Activated naive CD8-positive, alpha-beta T cell treated with anti-CD3 and anti-CD28 coated beads, Interleukin-2, amount 10 ng/mL, durations not matched to agents 7 days and 5 days (primary cell): ENCODE measurements at regions of chr9 and their contacts with region 1.

Region 1: DNA sequence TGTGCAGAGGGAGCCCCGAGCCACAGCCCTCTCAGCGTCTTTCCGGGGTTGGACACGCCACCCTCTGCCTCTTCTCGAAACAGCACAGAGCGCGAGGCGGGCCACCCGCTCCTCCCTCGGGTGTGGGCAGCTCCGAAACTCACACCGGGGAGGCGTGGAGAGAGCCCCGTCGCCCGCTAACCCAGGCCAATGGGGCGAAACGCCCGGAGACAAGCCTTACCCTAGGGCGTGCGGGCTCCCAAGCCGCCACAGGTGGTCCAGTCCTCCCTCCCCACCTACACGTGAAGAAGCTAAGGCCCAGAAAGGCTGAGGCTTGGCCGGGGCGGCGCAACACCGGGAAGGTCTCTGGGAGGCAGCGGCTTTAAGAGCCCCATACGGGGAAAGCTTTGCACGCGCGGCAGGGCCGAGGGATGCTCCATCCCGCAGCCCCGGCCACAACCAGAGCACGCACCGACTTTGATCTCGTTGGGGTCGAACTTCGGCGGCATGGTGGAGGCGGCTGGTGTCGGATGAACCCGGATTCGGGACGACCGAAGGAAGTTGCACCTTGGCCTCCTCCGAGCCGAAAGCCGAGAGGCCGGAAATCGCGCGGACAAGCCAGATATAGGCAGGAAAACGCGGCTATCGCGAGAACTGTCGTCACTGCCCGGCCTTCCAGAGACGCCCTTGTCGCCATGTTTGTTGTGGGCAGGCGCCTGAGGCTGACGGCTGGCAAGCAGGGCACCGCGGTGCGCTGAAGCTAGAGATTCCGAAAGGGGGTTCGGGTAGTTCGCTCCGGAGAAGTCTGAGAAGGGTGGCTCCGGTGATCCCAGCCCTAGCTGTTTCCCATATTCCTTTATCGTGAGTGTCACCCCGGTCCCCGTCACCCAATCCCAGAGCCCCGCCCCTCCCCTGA is at the starts of genes LRSAM1 and RPL12:
- DNase-seq: peak; percentile 99
- ATAC-seq: peak; percentile 73
- H3K4me3 Mint-ChIP-seq: peak within 1 kb of the TSS; percentile 89
- H3K27ac Mint-ChIP-seq: peak within 1 kb of the TSS; percentile 96
- H3K4me1 Mint-ChIP-seq: peaks cover 36% of the 10 kb centered on the region
- H3K27me3 Mint-ChIP-seq: no peaks in the 10 kb centered on the region
- total RNA-seq, gene LRSAM1: 22.4 to 25.5 TPM
- total RNA-seq, gene RPL12: 1,332 to 1,343 TPM

Region 2: DNA sequence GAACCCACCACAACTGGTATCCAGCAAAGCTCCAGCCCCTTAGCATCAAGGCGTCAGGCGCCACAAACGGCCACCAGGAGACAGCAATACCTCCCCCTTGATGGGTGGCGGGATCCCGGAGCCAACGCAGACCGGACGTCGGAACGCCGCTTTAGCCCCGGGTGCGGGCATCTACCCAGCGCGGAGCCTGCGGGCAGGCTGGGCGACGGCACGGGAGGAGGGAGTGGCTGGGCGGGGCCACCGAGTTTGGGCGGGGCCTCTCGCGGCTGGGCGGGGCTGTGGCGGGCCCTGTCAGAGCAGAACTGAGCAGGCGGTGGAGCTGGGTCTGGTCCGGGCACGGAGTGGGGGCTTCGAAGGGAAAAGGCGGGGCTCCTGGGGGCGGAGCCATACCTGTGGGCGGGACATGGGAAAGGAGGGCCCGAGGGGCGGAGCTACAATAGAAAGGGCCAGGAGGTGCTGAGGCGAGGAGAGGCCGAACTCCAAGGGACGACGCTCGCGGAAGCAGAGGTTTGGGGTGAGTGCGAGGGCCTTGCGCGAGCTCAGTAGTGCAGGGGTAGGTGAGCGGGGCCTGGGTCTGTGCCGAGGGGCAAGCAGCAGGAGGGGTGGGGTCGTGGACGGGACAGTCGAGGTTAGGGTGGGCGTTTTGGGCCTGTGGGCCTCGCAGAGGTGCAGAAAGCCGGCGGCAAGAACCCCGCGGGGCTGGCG is 226.7 kb before region 1 on chr9:
- POLR2A ChIA-PET with region 1: interaction called, 23 read pairs
- DNase-seq: peak; percentile 89
- ATAC-seq: peak; percentile 66
- H3K4me3 Mint-ChIP-seq: peak overlapping the region; percentile 82
- H3K27ac Mint-ChIP-seq: peak overlapping the region; percentile 79
- H3K4me1 Mint-ChIP-seq: peaks cover 22% of the 10 kb centered on the region
- H3K27me3 Mint-ChIP-seq: peaks cover 31% of the 10 kb centered on the region

Region 3: DNA sequence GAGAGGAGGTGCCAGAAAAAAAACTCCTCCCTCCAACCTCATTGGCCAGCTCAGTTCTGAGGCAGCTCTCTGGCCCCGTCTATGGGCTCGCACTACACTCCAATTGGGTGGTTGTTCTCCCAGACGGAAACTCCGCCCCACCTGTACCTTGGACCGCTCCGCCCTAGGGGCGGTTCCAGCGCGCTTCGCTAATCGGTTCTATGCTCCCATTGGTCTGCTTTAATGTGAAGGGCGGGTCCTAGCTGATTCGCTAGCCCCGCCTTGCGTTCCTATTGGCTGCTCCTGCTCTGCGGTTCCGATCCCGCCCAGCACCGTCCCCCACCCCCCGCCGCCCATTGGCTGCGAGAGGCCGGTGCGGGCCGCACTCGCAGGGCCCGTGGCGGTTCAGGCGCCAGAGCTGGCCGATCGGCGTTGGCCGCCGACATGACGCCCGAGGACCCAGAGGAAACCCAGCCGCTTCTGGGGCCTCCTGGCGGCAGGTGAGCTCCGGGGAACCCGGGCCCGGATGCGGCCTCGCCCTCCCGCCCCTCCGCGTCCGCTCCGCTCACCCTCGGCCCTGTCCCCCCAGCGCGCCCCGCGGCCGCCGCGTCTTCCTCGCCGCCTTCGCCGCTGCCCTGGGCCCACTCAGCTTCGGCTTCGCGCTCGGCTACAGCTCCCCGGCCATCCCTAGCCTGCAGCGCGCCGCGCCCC is 54.1 kb before region 1 on chr9 and contains the start of gene SLC2A8:
- POLR2A ChIA-PET with region 1: interaction called, 32 read pairs
- DNase-seq: peak; percentile 89
- ATAC-seq: peak; percentile 93
- H3K4me3 Mint-ChIP-seq: peak within 1 kb of the TSS; percentile 68
- H3K27ac Mint-ChIP-seq: no peak within 1 kb of the TSS
- H3K4me1 Mint-ChIP-seq: peaks cover 13% of the 10 kb centered on the region
- H3K27me3 Mint-ChIP-seq: peaks cover 69% of the 10 kb centered on the region
- total RNA-seq, gene SLC2A8: 3.4 to 4.1 TPM

Region 4: DNA sequence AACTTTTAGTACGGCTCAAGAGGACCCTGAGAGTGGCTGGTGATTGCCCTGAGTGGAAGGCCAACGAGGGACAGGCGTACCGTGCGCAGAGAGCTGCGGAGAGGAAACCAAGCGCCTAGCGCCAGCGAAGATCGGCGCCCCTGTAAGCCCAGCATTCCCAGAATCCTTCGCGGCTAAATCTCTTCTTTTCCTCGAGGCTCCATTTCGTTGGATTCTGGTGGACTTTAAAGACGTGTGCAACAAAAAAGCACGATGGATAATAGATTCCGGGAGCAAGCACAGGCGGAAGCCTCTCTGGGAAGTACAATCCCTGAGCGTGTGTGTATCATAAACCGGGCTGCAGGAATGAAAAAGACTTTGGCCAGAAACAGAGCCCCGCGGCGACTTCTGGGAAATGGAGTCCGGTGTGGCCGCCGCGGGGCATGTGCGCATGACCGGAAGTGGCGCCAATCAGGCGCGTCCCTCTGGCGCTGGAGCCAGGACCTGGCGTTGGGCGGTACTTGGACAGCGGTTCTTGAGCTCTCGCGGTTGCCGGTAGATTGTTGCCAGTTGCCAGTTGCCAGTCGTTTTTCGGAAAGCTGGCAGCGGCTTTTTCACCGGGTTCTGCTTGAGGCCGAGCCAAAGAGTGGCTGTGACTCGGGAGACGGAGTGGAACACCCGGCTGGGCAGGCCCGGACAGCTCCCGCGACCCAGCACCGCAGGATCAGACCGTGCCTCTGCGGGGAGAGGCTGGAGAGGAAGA is 27.0 kb before region 1 on chr9 and contains the start of gene ZNF79:
- POLR2A ChIA-PET with region 1: interaction called, 53 read pairs
- DNase-seq: peak; percentile 95
- ATAC-seq: peak; percentile 89
- H3K4me3 Mint-ChIP-seq: peak within 1 kb of the TSS; percentile 98
- H3K27ac Mint-ChIP-seq: peak within 1 kb of the TSS; percentile 92
- H3K4me1 Mint-ChIP-seq: peaks cover 32% of the 10 kb centered on the region
- H3K27me3 Mint-ChIP-seq: no peaks in the 10 kb centered on the region
- total RNA-seq, gene ZNF79: 14.2 to 15.0 TPM

Region 5: DNA sequence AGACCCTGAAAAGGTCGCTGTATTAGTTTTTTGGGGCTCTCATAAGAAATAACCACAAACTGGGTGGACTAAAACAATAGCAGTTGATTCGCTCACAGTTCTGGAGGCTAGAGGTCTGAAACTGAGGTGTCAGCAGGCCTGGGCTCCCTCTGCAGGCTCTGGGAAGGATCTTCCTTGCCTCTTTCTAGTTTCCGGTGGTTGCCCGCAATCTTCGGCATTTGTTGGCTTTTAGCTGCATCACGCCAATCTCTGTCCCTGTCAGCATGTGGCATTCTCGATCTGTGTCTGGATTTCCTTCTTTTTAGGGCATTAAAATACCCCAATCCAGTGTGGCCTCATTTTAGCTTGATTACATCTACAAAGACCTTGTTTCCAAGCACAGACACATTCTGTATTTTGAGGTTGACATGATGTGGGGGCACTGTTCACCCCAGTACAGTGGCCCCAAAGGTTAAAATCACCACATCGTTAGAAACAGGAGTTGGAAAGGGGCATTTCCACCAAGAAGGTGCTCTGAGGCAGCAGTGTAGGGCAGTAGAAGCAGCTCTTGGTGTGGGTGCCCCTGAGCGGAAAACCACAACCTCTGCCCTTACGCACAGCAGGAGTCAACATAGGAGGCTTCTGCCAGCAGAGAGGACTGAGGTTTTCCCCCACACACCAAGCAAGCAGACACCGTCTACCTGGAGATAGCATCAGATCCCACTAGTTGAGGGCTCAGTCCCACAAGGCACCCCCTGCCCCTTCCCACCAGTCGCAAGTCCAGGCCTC is 13.4 kb before region 1 on chr9:
- POLR2A ChIA-PET with region 1: interaction called, 23 read pairs
- DNase-seq: no peak
- ATAC-seq: peak; percentile 28
- H3K4me3 Mint-ChIP-seq: no peak overlapping the region
- H3K27ac Mint-ChIP-seq: no peak overlapping the region
- H3K4me1 Mint-ChIP-seq: peaks cover 4% of the 10 kb centered on the region
- H3K27me3 Mint-ChIP-seq: no peaks in the 10 kb centered on the region

Region 6: DNA sequence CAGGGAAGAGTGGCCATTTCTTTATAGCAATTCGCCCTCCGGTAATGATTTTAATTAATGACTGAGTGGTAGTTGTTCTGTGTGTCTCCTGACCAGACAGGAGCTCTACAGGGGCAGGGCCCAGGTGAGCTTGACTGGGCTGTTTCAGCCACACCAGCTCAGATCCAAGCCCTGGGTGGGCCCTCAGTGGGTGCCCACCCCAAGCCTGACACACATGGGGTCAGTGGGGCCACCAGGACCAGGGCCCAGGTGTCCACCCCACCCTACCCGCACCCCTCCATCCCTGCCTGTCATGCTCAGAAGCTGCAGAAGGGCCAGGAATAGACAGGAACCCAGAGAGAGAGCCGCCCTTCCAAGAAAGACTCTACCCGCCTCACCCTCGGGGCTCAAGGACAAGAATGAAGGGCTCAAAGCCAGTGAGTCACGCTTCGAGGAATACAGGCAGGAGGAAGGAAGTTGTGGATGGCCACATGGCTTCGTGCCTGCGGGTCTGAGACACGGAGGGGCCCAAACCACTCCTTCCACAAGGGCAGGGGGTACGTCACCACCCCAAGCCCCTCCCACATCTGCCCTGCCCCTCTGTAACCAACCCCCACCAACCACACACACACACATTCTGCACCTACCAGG is 104.8 kb after region 1 on chr9:
- POLR2A ChIA-PET with region 1: interaction called, 14 read pairs
- DNase-seq: peak; percentile 80
- ATAC-seq: peak; percentile 92
- H3K4me3 Mint-ChIP-seq: peak overlapping the region; percentile 85
- H3K27ac Mint-ChIP-seq: peak overlapping the region; percentile 94
- H3K4me1 Mint-ChIP-seq: peaks cover 62% of the 10 kb centered on the region
- H3K27me3 Mint-ChIP-seq: no peaks in the 10 kb centered on the region

Region 7: DNA sequence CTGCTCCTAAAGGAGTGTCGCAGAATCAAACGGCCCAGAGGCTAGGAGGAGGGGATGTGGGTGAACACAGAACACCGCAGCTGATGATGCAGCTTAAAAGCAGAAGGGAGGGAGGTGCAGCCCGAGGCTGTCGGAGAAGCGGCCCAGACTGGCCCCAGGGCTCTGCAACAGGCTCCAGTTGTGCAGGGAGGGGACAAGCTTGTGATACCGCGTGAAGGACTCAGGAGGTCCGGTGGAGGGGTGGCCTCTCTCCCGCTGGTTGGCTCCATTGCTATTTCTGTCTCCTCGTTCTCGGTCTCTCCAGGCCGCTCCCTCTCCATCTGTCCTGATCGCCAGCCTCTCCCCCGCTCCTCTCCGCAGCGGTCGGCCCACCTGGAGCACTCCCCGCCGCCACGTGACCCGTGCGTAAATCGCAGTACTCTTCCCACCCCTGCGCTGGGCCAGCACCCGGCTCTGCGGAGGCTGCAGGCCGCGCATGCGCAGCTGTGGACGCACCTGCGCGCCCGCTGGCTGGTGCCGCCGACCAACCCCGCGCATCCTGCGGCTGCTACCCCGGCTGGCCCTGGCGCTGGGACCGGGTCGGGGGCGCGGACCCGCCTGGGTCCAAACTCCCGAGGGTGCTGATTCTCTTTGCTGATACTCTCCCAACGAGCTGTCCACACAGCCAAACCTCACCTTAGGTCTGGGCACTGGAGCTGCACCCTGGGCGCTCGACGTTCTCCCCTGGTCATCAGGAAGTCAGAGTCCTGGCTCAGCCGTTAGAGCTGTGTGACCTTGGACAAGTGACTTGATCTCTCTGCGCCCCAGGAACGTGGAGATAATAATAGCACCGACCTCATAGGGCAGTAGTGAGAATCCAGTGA is 157.3 kb after region 1 on chr9:
- POLR2A ChIA-PET with region 1: interaction called, 12 read pairs
- DNase-seq: peak; percentile 85
- ATAC-seq: peak; percentile 55
- H3K4me3 Mint-ChIP-seq: peak overlapping the region; percentile 85
- H3K27ac Mint-ChIP-seq: peak overlapping the region; percentile 61
- H3K4me1 Mint-ChIP-seq: peaks cover 20% of the 10 kb centered on the region
- H3K27me3 Mint-ChIP-seq: peaks cover 38% of the 10 kb centered on the region